ENCODE measurements at regions of chr18 and their contacts with region 1.

Region 1: GRCh38 chr18:78459668-78460067 is 520.0 kb upstream of the SALL3 start:
- ATAC-seq: no peak
- H3K4me3 ChIP-seq: no peak overlapping the region
- H3K27ac ChIP-seq: no peak overlapping the region
- H3K4me1 ChIP-seq: no peaks in the 10 kb centered on the region

Region 2: GRCh38 chr18:78352910-78353309 is 106.8 kb before region 1 on chr18:
- in situ Hi-C with region 1: loop called in 1 of 9 experiments (anchors 25 kb)
- ATAC-seq: peak in 1 of 8 experiments; percentile 71
- H3K4me3 ChIP-seq: no peak overlapping the region
- H3K27ac ChIP-seq: no peak overlapping the region
- H3K4me1 ChIP-seq: no peaks in the 10 kb centered on the region

Measured in motor neuron (in vitro differentiated cells).